ENCODE measurements at regions of chr10 and their contacts with region 1.

Region 1: DNA sequence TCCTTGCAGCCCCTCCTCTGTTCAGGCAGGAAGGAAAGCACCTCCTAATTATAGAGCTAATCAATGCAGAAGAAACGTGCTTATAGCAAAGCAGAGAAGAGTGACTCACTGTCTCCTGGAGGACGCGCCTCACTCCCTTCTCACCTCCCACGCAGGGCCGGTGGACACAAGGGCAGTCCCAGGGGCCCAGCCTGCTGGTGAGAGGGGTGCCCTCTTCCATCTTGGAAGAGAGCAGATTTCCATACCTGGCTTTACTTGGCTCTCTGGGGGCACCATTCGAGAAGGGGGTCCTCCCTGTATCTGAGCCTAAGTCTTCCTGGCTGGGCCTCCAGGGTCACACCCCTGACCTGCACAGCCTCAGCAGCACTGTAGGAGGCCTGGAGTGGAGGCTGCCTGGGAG is 55.8 kb downstream of the RASGEF1A start:
- DNase-seq: peak; percentile 72

Region 2: GRCh38 chr10:43333653-43334052 is 122.6 kb after region 1 on chr10:
- intact Hi-C with region 1: no loop called
- DNase-seq: no peak

Region 3: DNA sequence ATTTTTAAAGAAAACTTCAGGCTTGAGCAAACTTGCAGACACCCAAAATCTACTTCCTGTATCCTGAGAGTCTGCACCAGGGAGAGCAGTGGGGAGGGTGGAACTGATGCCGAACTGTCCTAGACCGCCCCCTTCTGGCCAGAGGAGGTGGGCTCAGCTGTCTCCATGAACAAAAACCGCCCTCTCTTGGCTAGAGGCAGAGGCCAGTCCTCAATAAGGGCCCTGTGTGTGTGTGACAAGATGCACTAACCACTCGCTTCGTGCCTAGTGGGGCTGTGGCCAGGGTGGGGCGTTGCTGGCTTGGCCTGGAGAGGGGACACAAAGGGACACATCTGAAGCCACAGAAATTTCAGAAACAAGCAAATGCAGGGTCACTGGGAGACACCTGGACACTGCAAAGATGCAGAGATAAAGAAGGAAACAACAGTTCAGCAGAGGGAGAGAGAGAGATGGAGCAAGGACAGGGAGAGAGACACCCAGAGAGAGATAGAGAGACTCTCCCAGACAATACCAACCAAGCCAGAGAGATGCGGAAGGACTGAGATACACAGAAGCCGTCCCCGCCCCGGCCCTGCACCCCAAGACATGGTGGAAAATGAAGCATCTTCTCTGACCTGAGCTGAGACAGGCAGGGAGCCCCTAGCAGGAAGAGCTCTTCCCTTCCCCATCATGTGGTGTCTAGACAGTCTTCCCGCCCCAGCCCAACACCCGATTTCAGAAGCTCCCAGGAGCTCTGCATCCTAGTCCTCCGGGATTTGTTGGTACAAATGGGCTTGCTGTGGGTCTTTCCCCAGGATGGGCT is 137.7 kb after region 1 on chr10:
- intact Hi-C with region 1: loop called (anchors 10 kb)
- DNase-seq: peak; percentile 93

Region 4: GRCh38 chr10:43380610-43381222 is 169.7 kb after region 1 on chr10:
- intact Hi-C with region 1: no loop called
- DNase-seq: peak; percentile 5

Region 5: DNA sequence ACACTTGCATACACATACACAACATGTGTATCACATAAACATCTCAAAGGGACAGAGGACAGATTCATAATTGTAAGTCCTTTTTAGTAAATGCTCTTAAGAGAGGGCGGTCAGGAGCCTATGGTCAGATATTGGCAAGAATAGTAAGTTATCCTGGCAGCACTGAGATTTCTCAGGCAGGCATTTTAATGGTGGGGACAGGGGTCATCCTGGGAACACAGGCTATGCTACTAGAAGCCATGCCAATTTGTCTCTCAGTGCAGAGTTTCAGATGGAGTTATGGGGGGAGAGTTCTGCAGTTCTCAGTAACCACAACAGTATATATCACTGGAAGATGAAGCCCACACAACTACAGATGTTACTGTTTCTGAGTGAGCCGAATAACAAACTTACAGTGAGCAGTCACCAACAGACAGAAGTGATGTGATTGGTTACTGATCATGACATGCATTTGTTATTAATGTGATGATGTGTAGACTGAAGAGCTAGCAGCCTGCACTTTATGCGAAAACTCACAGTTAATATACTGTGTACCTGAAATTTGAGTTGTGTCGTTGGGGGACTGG is 242.3 kb after region 1 on chr10:
- intact Hi-C with region 1: no loop called
- DNase-seq: no peak

Measured in cardiac septum (tissue), 1 donor.